ENCODE measurements at regions of chr10 and their contacts with region 1.

Region 1: DNA sequence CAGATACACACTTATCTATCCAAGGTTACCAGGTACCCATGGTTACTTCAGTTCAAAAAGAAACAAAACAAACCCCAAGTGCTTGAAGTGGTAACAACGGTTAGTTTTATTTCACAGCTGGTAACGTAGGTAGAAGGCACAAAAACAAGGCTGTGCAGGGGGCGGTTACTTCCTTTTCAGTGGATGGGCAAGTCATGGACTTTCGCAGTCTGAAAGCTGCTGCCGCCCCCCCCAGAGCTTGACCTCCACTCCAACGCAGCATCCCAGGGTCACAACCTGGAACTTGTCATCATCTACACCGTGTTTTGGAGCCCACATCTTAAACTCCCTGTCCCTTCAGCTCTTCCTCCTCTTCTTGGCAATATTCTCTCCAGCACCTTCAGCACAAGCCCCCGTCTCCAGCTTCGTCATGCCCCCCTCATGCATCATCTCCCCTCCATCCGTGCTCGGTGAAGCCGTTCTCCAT is 181.2 kb upstream of the ITGB1 start:
- DNase-seq: peak; percentile 63 to 97 (median 95)
- ATAC-seq: peak; percentile 90
- H3K4me3 ChIP-seq: peak overlapping the region; percentile 31
- H3K4me3 Mint-ChIP-seq: peak overlapping the region; percentile 71 to 87 (median 80)
- H3K27ac ChIP-seq: peak overlapping the region; percentile 65
- H3K27ac Mint-ChIP-seq: peak overlapping the region; percentile 92 to 100 (median 96)
- H3K4me1 ChIP-seq: peaks cover 41 to 65% of the 10 kb centered on the region in 2 donors
- H3K4me1 Mint-ChIP-seq: peaks cover 30 to 77% (median 67%) of the 10 kb centered on the region in 7 donors
- H3K27me3 ChIP-seq: no peaks in the 10 kb centered on the region
- H3K27me3 Mint-ChIP-seq: no peaks in the 10 kb centered on the region

Region 2: GRCh38 chr10:32856387-32856786 is 282.8 kb before region 1 on chr10:
- CTCF ChIA-PET with region 1: no interaction called
- POLR2A ChIA-PET with region 1: no interaction called
- intact Hi-C with region 1: no loop called
- DNase-seq: no peak
- ATAC-seq: no peak
- H3K4me3 ChIP-seq: no peak overlapping the region
- H3K4me3 Mint-ChIP-seq: no peak overlapping the region
- H3K27ac ChIP-seq: no peak overlapping the region
- H3K27ac Mint-ChIP-seq: no peak overlapping the region
- H3K4me1 ChIP-seq: no peaks in the 10 kb centered on the region
- H3K4me1 Mint-ChIP-seq: peaks cover 0 to 4% (median 0%) of the 10 kb centered on the region in 7 donors
- H3K27me3 ChIP-seq: no peaks in the 10 kb centered on the region
- H3K27me3 Mint-ChIP-seq: no peaks in the 10 kb centered on the region

Region 3: GRCh38 chr10:33087152-33087551 is 52.1 kb before region 1 on chr10:
- CTCF ChIA-PET with region 1: no interaction called
- POLR2A ChIA-PET with region 1: no interaction called
- intact Hi-C with region 1: loop called in 1 of 2 experiments (anchors 2 kb)
- DNase-seq: peak in 1 of 9 donors; percentile 9
- ATAC-seq: peak; percentile 22
- H3K4me3 ChIP-seq: no peak overlapping the region
- H3K4me3 Mint-ChIP-seq: peak overlapping the region in 7 of 10 donors; percentile 6 to 54 (median 34)
- H3K27ac ChIP-seq: no peak overlapping the region
- H3K27ac Mint-ChIP-seq: peak overlapping the region in 3 of 9 donors; percentile 15 to 30 (median 26)
- H3K4me1 ChIP-seq: peaks cover 8 to 17% of the 10 kb centered on the region in 2 donors
- H3K4me1 Mint-ChIP-seq: peaks cover 6 to 31% (median 14%) of the 10 kb centered on the region in 7 donors
- H3K27me3 ChIP-seq: no peaks in the 10 kb centered on the region
- H3K27me3 Mint-ChIP-seq: no peaks in the 10 kb centered on the region

Region 4: GRCh38 chr10:33115738-33116719 is 23.2 kb before region 1 on chr10:
- CTCF ChIA-PET with region 1: no interaction called
- POLR2A ChIA-PET with region 1: interaction called, 5 read pairs
- intact Hi-C with region 1: loop called (anchors 2 kb)
- DNase-seq: no peak
- ATAC-seq: peak; percentile 24
- H3K4me3 ChIP-seq: peak overlapping the region; percentile 31
- H3K4me3 Mint-ChIP-seq: peak overlapping the region in 3 of 10 donors; percentile 8 to 20 (median 13)
- H3K27ac ChIP-seq: no peak overlapping the region
- H3K27ac Mint-ChIP-seq: peak overlapping the region in 3 of 9 donors; percentile 51 to 76 (median 65)
- H3K4me1 ChIP-seq: peaks cover 9 to 95% of the 10 kb centered on the region in 2 donors
- H3K4me1 Mint-ChIP-seq: peaks cover 23 to 69% (median 32%) of the 10 kb centered on the region in 7 donors
- H3K27me3 ChIP-seq: no peaks in the 10 kb centered on the region
- H3K27me3 Mint-ChIP-seq: no peaks in the 10 kb centered on the region

Region 5: DNA sequence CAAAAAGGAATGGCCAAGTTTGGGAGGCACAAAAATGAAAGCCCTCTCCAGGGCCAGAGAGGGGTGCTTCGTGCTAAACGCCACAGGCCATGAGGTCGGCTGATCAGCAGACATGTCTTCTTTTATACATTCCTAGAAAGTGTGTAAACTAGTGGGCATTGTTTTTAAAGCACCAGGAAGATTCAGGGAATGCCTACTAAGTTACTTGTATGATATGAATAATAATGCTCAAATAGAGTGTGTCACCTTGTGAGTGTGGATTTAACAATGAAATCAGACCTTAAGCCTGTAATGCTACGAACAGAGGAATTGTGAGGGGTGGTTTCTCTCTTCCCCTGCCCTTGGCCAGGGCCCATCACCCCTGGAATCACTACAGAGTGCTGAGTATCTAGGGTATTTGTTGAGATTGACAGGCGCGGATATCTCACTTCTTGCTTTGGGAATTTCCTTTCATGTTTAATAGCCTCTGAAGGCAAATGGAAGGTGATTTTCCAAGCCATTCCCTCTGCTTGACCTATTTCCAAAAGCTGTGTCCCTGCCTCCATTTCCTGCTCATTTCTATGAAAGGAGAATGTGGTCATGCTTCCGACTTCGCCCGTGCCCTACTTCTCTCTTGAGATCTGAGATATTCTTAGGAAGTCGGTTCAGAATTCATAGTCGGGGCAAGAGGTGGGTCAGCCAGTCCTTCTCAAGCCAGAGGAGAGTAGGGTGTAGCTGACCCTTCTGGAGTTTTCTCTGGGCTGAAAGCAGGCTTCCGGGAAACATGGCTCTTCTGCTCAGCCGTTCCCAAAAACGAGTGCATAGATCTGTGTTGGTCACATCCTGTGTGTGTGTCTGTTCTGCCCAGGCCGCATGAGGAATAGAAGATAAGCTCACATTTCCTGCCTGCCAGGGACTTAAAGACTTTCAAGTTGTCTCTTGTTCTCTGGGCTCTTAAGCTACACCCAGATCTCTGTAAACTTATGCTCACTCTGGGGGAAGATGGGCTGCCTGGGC is 13.4 kb before region 1 on chr10:
- CTCF ChIA-PET with region 1: interaction called, 6 read pairs
- POLR2A ChIA-PET with region 1: interaction called, 40 read pairs
- intact Hi-C with region 1: loop called in 1 of 2 experiments (anchors 1 kb)
- DNase-seq: peak in 5 of 9 donors; percentile 25 to 63 (median 48)
- ATAC-seq: peak; percentile 87
- H3K4me3 ChIP-seq: no peak overlapping the region
- H3K4me3 Mint-ChIP-seq: peak overlapping the region; percentile 53 to 78 (median 62)
- H3K27ac ChIP-seq: peak overlapping the region; percentile 60
- H3K27ac Mint-ChIP-seq: peak overlapping the region; percentile 90 to 96 (median 92)
- H3K4me1 ChIP-seq: peaks cover 24 to 82% of the 10 kb centered on the region in 2 donors
- H3K4me1 Mint-ChIP-seq: peaks cover 34 to 77% (median 69%) of the 10 kb centered on the region in 7 donors
- H3K27me3 ChIP-seq: no peaks in the 10 kb centered on the region
- H3K27me3 Mint-ChIP-seq: no peaks in the 10 kb centered on the region

Region 6: GRCh38 chr10:33155720-33156638 is 16.8 kb after region 1 on chr10:
- CTCF ChIA-PET with region 1: interaction called, 14 read pairs
- POLR2A ChIA-PET with region 1: interaction called, 22 read pairs
- intact Hi-C with region 1: loop called (anchors 1 to 2 kb)
- DNase-seq: peak in 7 of 9 donors; percentile 28 to 65 (median 55)
- ATAC-seq: peak; percentile 85
- H3K4me3 ChIP-seq: no peak overlapping the region
- H3K4me3 Mint-ChIP-seq: no peak overlapping the region
- H3K27ac ChIP-seq: no peak overlapping the region
- H3K27ac Mint-ChIP-seq: peak overlapping the region in 8 of 9 donors; percentile 0 to 88 (median 41)
- H3K4me1 ChIP-seq: peaks cover 15 to 44% of the 10 kb centered on the region in 2 donors
- H3K4me1 Mint-ChIP-seq: peaks cover 8 to 41% (median 35%) of the 10 kb centered on the region in 7 donors
- H3K27me3 ChIP-seq: no peaks in the 10 kb centered on the region
- H3K27me3 Mint-ChIP-seq: no peaks in the 10 kb centered on the region

Region 7: DNA sequence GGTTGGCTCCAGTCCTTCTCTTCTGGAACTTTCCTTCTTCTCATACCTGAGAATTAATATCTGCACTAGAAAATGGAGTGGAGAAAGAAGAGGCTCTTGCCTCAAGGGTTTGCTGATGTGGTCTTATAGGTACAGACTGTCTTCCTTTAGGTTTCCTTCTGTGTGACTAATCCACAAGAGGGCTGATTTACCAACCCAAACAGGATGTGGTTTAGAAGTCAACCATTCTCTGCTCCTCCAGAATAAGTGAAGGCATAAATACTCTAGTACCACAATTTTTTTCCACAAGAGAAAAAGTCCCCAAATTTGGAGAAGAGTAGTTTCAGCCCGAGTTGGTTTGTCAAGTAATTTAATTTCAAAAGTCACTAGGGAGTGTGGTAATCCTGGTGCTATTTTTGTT is 109.4 kb after region 1 on chr10:
- CTCF ChIA-PET with region 1: no interaction called
- POLR2A ChIA-PET with region 1: interaction called, 3 read pairs
- intact Hi-C with region 1: loop called (anchors 1 to 2 kb)
- DNase-seq: peak in 8 of 9 donors; percentile 38 to 86 (median 76)
- ATAC-seq: peak; percentile 97
- H3K4me3 ChIP-seq: peak overlapping the region; percentile 21
- H3K4me3 Mint-ChIP-seq: peak overlapping the region; percentile 60 to 89 (median 78)
- H3K27ac ChIP-seq: no peak overlapping the region
- H3K27ac Mint-ChIP-seq: peak overlapping the region; percentile 70 to 94 (median 87)
- H3K4me1 ChIP-seq: peaks cover 21 to 29% of the 10 kb centered on the region in 2 donors
- H3K4me1 Mint-ChIP-seq: peaks cover 28 to 80% (median 64%) of the 10 kb centered on the region in 7 donors
- H3K27me3 ChIP-seq: no peaks in the 10 kb centered on the region
- H3K27me3 Mint-ChIP-seq: peaks cover 0 to 43% (median 0%) of the 10 kb centered on the region in 5 donors

Region 8: GRCh38 chr10:33534429-33534828 is 395.2 kb after region 1 on chr10:
- CTCF ChIA-PET with region 1: no interaction called
- POLR2A ChIA-PET with region 1: no interaction called
- intact Hi-C with region 1: no loop called
- DNase-seq: no peak
- ATAC-seq: no peak
- H3K4me3 ChIP-seq: no peak overlapping the region
- H3K4me3 Mint-ChIP-seq: no peak overlapping the region
- H3K27ac ChIP-seq: no peak overlapping the region
- H3K27ac Mint-ChIP-seq: no peak overlapping the region
- H3K4me1 ChIP-seq: no peaks in the 10 kb centered on the region
- H3K4me1 Mint-ChIP-seq: peaks cover 0 to 2% (median 0%) of the 10 kb centered on the region in 7 donors
- H3K27me3 ChIP-seq: no peaks in the 10 kb centered on the region
- H3K27me3 Mint-ChIP-seq: peaks cover 8 to 47% (median 33%) of the 10 kb centered on the region in 5 donors